ENCODE measurements at regions of chr2 and their contacts with region 1.

Region 1: DNA sequence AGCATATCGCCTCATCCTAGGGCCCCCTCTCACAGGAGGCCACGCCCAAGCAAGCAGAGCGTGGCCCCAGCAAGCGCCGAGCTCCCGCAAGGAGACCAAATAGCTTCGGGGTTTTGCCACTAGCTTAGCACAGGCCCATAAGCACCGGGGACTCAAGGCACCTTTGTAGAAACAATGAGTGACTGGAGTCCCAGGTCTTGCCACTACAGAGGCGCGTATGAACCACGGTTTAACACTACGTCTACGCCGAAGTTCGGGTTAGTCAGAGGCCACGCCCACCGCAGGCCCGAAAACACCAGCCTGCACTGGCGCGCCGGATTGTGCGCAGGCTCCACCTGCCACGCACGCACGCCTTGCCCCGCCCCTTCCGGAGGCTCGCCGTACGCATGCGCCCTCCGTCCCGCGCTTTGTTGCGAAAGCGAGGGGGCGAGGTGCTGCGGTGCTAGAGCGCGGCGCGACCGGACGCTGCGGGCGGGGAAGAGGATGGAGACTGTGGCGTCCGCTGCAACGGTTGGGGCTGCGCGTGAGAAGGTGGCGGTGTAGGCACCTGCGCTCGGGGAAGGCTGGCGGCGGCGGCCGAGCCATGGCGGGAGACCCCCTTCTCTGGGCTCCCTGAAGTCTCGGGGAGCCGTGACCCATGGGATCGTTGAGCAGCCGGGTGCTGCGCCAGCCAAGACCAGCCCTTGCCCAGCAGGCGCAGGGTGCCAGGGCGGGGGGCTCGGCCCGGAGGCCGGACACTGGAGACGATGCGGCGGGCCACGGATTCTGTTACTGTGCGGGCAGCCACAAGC is at the start of gene GMCL1:
- DNase-seq: peak; percentile 99
- H3K4me3 Mint-ChIP-seq: peak within 1 kb of the TSS; percentile 98
- H3K27ac Mint-ChIP-seq: peak within 1 kb of the TSS; percentile 95
- H3K4me1 Mint-ChIP-seq: peaks cover 59% of the 10 kb centered on the region
- H3K27me3 Mint-ChIP-seq: no peaks in the 10 kb centered on the region
- total RNA-seq, gene GMCL1: 25.6 and 32.8 TPM in 2 replicates

Region 2: GRCh38 chr2:69386789-69387734 is 442.4 kb before region 1 on chr2 and contains the start of gene GFPT1:
- intact Hi-C with region 1: loop called (anchors 5 kb)
- DNase-seq: peak; percentile 93
- H3K4me3 Mint-ChIP-seq: peak within 1 kb of the TSS; percentile 87
- H3K27ac Mint-ChIP-seq: peak within 1 kb of the TSS; percentile 81
- H3K4me1 Mint-ChIP-seq: peaks cover 46% of the 10 kb centered on the region
- H3K27me3 Mint-ChIP-seq: no peaks in the 10 kb centered on the region
- total RNA-seq, gene GFPT1: 47.3 and 52.3 TPM in 2 replicates

Region 3: DNA sequence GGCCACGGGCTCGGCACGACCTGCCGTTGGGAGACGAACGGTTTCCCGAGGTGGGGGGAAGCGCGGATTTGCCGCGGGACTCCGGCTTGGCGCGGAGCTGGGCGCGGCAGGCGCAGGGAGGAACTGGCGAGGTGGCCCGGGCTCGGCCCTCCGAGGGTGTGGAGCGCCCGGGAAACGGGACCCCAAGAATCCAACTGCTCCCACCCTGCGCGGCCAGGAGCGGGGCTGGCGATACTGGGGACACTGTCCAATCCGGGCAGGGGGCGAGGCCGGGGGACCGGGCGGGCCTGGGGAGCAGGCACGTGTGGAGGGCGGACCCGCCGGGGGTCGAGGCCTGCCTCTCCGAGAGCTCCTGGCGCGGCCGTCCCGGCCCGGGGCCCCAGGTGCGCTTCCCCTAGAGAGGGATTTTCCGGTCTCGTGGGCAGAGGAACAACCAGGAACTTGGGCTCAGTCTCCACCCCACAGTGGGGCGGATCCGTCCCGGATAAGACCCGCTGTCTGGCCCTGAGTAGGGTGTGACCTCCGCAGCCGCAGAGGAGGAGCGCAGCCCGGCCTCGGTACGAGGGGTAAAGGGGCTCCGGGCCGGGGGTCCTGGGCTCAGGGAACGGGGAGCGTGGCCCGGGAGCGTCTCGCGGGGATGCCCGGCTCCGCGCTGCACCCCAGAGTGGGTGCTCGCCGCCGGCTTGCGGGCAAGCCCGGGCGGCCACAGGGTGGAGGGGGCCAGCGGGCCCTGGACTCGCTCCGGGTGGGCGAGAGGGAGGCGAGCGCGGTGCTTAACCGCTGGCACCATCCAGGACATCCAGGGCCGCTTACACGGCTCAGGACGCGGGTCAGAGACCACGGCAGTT is 87.6 kb before region 1 on chr2 and contains the start of gene ANXA4:
- intact Hi-C with region 1: loop called (anchors 1 kb)
- DNase-seq: peak; percentile 63
- H3K4me3 Mint-ChIP-seq: peak within 1 kb of the TSS; percentile 98
- H3K27ac Mint-ChIP-seq: peak within 1 kb of the TSS; percentile 96
- H3K4me1 Mint-ChIP-seq: peaks cover 26% of the 10 kb centered on the region
- H3K27me3 Mint-ChIP-seq: peaks cover 6% of the 10 kb centered on the region
- total RNA-seq, gene ANXA4: 36.2 and 38.0 TPM in 2 replicates

Region 4: DNA sequence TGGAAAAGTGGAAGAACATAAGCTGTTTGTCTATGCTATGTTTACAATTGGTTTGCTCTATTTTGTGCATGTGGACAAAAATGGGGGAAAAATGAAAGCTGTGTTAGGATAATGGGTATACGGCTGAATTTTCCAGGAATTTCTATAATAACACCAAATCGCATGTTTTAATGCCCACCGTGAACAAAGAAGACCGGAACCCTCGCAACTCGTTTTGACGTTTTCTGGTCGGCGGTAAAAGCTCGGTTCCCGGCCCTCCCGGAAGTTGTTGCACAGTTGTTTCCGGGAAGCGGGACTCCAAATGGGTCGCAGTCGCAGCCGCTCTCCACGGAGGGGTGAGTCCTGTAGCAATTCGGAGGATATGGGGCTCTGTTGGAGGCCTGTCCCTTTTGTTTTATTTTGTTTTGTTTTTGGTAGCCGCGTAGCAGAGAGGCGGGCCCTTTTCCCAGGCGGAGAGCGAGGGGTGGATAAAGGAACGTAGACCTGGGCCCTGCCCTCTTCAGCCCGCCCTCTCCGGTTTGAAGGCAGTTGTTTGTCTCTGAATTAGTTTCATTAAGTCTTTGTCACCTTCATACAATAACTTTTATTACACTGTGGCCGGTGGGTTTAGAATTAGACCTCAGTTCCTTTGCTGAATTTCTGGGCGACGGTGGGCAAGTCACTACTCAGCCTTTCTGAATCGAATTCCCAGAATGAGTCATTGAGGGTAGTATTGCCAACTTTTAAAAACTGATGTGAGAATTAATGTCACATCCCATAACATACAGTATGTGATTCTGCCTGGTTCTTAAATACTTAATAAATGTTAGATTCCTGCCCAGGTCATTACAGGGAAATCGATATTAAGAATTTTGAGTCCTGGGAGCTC is 64.5 kb after region 1 on chr2 and contains the start of gene SNRNP27:
- intact Hi-C with region 1: loop called (anchors 2 kb)
- DNase-seq: peak; percentile 71
- H3K4me3 Mint-ChIP-seq: peak within 1 kb of the TSS; percentile 99
- H3K27ac Mint-ChIP-seq: peak within 1 kb of the TSS; percentile 93
- H3K4me1 Mint-ChIP-seq: peaks cover 36% of the 10 kb centered on the region
- H3K27me3 Mint-ChIP-seq: no peaks in the 10 kb centered on the region
- total RNA-seq, gene SNRNP27: 54.0 and 55.6 TPM in 2 replicates